Activated B cell treated with CpG ODN at 0.5 μM for 24 hours (primary cell): ENCODE measurements at regions of chr2 and their contacts with region 1.

Region 1: DNA sequence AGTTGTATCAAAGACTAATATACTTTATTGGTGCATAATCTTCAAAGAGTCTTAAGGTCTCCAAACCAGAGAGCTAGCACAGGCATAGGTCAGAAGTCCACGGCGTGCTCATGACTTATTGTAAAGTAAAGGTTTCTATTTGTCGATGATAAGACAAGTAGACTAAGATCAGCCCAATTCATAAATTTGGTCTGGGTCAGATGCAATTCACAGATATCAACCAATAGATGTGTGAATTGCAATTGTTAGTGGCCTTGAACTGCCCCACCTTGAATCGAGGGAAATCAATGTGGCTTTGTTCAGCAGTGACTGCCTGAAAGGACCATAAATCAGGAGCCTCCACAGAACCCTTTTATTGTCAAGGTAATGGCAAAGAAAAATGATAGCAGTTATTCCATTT is 39.1 kb upstream of the CPS1 start:
- DNase-seq: no peak
- ATAC-seq: no peak
- H3K4me3 Mint-ChIP-seq: no peak overlapping the region
- H3K27ac Mint-ChIP-seq: no peak overlapping the region
- H3K4me1 Mint-ChIP-seq: no peaks in the 10 kb centered on the region
- H3K27me3 Mint-ChIP-seq: peaks cover 33% of the 10 kb centered on the region
- CTCF ChIP-seq: no peak

Region 2: DNA sequence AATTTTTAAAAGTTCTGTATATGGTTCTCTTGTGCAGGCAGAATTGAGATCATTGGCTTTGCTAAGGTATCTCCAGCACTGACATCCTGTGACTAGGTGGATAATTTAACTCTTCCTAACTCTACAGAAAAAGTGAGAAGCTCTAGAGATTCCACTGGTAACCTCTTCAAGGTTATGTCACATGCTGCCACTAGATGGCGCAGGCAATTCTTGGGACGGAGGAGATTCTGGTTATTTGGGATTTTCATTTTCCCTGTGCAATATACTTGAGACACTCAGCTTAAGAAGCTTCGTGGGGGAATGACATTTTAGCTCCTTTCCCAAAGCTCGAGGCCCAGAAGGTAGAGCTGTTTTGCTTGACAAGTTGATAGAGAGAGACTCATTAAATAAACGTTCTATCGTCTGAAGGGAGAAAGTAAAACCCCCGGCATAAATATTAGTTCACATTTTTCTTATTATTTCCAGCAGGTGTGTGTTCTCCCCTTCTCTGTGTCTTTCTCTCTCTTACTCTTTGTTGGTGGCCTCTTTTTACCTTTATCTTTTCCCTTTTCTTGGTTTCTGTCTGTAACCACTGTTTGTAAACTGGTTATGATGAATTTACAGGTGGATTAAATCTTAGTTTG is 14.1 kb before region 1 on chr2:
- CTCF ChIA-PET with region 1: interaction called, 10 read pairs
- POLR2A ChIA-PET with region 1: no interaction called
- intact Hi-C with region 1: no loop called
- DNase-seq: no peak
- ATAC-seq: peak; percentile 49
- H3K4me3 Mint-ChIP-seq: peak overlapping the region; percentile 63
- H3K27ac Mint-ChIP-seq: no peak overlapping the region
- H3K4me1 Mint-ChIP-seq: peaks cover 6% of the 10 kb centered on the region
- H3K27me3 Mint-ChIP-seq: peaks cover 22% of the 10 kb centered on the region
- CTCF ChIP-seq: peak; percentile 98